ENCODE measurements at regions of chr1 and their contacts with region 1.

Region 1: GRCh38 chr1:246012341-246012740 is 494.7 kb downstream of the SMYD3 start:
- DNase-seq: no peak
- ATAC-seq: no peak
- H3K4me3 Mint-ChIP-seq: no peak overlapping the region
- H3K27ac Mint-ChIP-seq: no peak overlapping the region
- H3K4me1 Mint-ChIP-seq: no peaks in the 10 kb centered on the region
- H3K27me3 Mint-ChIP-seq: no peaks in the 10 kb centered on the region
- CTCF ChIP-seq: no peak

Region 2: GRCh38 chr1:246117066-246117791 is 104.9 kb after region 1 on chr1:
- CTCF ChIA-PET with region 1: no interaction called
- POLR2A ChIA-PET with region 1: no interaction called
- intact Hi-C with region 1: loop called (anchors 5 kb)
- DNase-seq: no peak
- ATAC-seq: peak; percentile 89
- H3K4me3 Mint-ChIP-seq: peak overlapping the region; percentile 38
- H3K27ac Mint-ChIP-seq: peak overlapping the region; percentile 35
- H3K4me1 Mint-ChIP-seq: peaks cover 32% of the 10 kb centered on the region
- H3K27me3 Mint-ChIP-seq: no peaks in the 10 kb centered on the region
- CTCF ChIP-seq: no peak

Region 3: GRCh38 chr1:246280551-246280950 is 268.2 kb after region 1 on chr1:
- CTCF ChIA-PET with region 1: no interaction called
- POLR2A ChIA-PET with region 1: interaction called, 5 read pairs
- intact Hi-C with region 1: loop called (anchors 1 kb)
- DNase-seq: no peak
- ATAC-seq: no peak
- H3K4me3 Mint-ChIP-seq: no peak overlapping the region
- H3K27ac Mint-ChIP-seq: no peak overlapping the region
- H3K4me1 Mint-ChIP-seq: no peaks in the 10 kb centered on the region
- H3K27me3 Mint-ChIP-seq: no peaks in the 10 kb centered on the region
- CTCF ChIP-seq: no peak

Region 4: DNA sequence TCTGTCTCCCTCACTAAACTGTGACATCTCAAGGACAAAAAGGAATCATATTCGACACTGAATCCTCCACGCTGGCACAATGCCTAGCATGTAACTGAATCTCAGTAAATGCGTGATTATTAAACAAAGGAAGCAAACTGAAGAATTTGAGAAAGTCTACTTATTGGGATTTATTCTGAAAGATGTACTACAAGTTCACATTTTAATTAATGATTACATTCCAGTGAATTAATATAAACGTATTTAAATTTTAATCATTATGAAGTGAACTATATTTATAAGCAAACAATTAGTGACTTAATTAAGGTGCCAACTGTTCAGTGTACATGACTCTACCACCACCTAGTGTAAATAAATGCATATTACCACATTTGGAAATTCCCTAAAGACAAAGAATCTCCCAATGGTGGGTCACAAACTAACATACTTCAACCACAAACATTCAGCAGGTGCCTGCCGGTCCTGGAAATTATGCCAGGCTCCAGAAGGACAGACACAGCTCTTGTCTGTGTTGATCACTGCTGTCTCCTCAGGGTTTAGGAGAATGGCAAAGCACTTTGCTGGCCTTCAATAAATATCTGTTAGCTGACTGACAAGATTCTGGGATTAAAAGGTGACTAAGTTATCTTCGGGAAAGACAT is 438.4 kb after region 1 on chr1:
- CTCF ChIA-PET with region 1: interaction called, 4 read pairs
- POLR2A ChIA-PET with region 1: no interaction called
- intact Hi-C with region 1: loop called (anchors 1 kb)
- DNase-seq: no peak
- ATAC-seq: no peak
- H3K4me3 Mint-ChIP-seq: no peak overlapping the region
- H3K27ac Mint-ChIP-seq: no peak overlapping the region
- H3K4me1 Mint-ChIP-seq: no peaks in the 10 kb centered on the region
- H3K27me3 Mint-ChIP-seq: no peaks in the 10 kb centered on the region
- CTCF ChIP-seq: no peak

Region 5: DNA sequence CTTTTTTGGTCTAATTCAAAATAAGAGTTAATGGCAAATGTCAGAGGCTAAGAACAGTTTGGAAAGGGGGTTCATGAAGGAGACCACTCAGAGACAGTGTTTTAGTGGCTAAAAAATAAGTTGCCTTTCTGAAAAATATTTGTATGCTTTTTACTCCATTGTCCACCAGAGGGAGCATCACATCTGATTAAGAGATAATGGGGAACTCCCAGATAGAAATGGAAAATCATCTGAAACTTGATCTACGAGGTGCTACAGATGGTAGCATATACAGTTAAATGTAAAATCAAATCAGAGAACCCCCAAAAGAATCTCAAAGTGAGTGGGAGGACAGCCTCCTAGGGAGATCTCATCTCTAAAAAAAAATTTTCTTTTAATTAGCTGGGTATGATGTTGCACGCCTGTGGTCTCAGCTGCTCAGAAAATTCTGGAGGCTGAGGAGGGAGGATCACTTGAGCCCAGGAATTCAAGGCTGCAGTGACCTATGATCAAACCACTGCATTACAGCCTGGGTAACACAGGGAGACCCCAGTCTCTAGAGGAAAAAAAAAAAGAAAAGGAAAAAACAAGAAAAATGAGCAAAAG is 485.1 kb after region 1 on chr1:
- CTCF ChIA-PET with region 1: no interaction called
- POLR2A ChIA-PET with region 1: no interaction called
- intact Hi-C with region 1: loop called (anchors 1 kb)
- DNase-seq: no peak
- ATAC-seq: peak; percentile 86
- H3K4me3 Mint-ChIP-seq: no peak overlapping the region
- H3K27ac Mint-ChIP-seq: no peak overlapping the region
- H3K4me1 Mint-ChIP-seq: peaks cover 4% of the 10 kb centered on the region
- H3K27me3 Mint-ChIP-seq: no peaks in the 10 kb centered on the region
- CTCF ChIP-seq: peak; percentile 55

Region 6: GRCh38 chr1:246699095-246699735 is 686.9 kb after region 1 on chr1:
- CTCF ChIA-PET with region 1: no interaction called
- POLR2A ChIA-PET with region 1: no interaction called
- intact Hi-C with region 1: loop called (anchors 1 kb)
- DNase-seq: peak; percentile 62
- ATAC-seq: peak; percentile 90
- H3K4me3 Mint-ChIP-seq: peak overlapping the region; percentile 74
- H3K27ac Mint-ChIP-seq: peak overlapping the region; percentile 57
- H3K4me1 Mint-ChIP-seq: peaks cover 8% of the 10 kb centered on the region
- H3K27me3 Mint-ChIP-seq: no peaks in the 10 kb centered on the region
- CTCF ChIP-seq: no peak

Region 7: GRCh38 chr1:246753670-246754535 is 741.6 kb after region 1 on chr1:
- CTCF ChIA-PET with region 1: no interaction called
- POLR2A ChIA-PET with region 1: no interaction called
- intact Hi-C with region 1: loop called (anchors 5 kb)
- DNase-seq: peak; percentile 34
- ATAC-seq: peak; percentile 93
- H3K4me3 Mint-ChIP-seq: no peak overlapping the region
- H3K27ac Mint-ChIP-seq: no peak overlapping the region
- H3K4me1 Mint-ChIP-seq: peaks cover 4% of the 10 kb centered on the region
- H3K27me3 Mint-ChIP-seq: no peaks in the 10 kb centered on the region
- CTCF ChIP-seq: no peak